Calu3 (cell line): ENCODE measurements at regions of chr5 and their contacts with region 1.

Region 1: DNA sequence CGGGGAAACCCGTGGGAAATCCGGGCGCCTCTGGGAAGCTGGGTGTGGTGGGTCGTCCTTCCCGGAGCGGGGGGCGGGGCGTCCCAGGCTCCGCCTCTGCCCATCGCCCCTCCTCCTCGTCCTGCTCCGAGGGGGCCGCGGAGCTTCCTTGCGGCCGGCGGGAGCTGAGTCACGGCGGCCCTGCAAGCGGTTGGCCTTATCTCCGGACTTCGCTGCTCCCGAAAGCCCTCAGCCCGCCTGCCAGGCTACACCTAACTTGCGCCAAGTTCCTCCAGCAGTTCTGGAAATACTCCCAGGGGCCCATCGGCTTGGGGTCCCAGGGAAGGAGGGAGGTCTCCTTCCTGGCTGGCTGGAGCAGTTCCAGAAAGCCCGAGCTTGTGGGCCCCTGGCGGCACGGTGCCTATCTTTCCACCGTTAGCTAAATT is 54.1 kb upstream of the CDKN2AIPNL start:
- DNase-seq: peak; percentile 96
- H3K4me3 Mint-ChIP-seq: peak overlapping the region; percentile 61
- H3K27ac Mint-ChIP-seq: peak overlapping the region; percentile 49
- H3K4me1 Mint-ChIP-seq: peaks cover 11% of the 10 kb centered on the region
- H3K27me3 Mint-ChIP-seq: no peaks in the 10 kb centered on the region
- CTCF ChIP-seq: no peak

Region 2: GRCh38 chr5:134436523-134437339 is 29.1 kb before region 1 on chr5:
- CTCF ChIA-PET with region 1: interaction called, 14 read pairs
- intact Hi-C with region 1: no loop called
- DNase-seq: peak; percentile 91
- H3K4me3 Mint-ChIP-seq: peak overlapping the region; percentile 29
- H3K27ac Mint-ChIP-seq: peak overlapping the region; percentile 80
- H3K4me1 Mint-ChIP-seq: peaks cover 62% of the 10 kb centered on the region
- H3K27me3 Mint-ChIP-seq: no peaks in the 10 kb centered on the region
- CTCF ChIP-seq: no peak

Region 3: GRCh38 chr5:134451936-134452505 is 13.8 kb before region 1 on chr5:
- CTCF ChIA-PET with region 1: interaction called, 10 read pairs
- intact Hi-C with region 1: no loop called
- DNase-seq: peak; percentile 66
- H3K4me3 Mint-ChIP-seq: no peak overlapping the region
- H3K27ac Mint-ChIP-seq: no peak overlapping the region
- H3K4me1 Mint-ChIP-seq: peaks cover 2% of the 10 kb centered on the region
- H3K27me3 Mint-ChIP-seq: no peaks in the 10 kb centered on the region
- CTCF ChIP-seq: no peak

Region 4: GRCh38 chr5:134503088-134503946 is 37.5 kb after region 1 on chr5:
- CTCF ChIA-PET with region 1: interaction called, 16 read pairs
- intact Hi-C with region 1: loop called (anchors 2 kb)
- DNase-seq: peak; percentile 95
- H3K4me3 Mint-ChIP-seq: peak overlapping the region; percentile 19
- H3K27ac Mint-ChIP-seq: peak overlapping the region; percentile 94
- H3K4me1 Mint-ChIP-seq: peaks cover 46% of the 10 kb centered on the region
- H3K27me3 Mint-ChIP-seq: no peaks in the 10 kb centered on the region
- CTCF ChIP-seq: no peak

Region 5: DNA sequence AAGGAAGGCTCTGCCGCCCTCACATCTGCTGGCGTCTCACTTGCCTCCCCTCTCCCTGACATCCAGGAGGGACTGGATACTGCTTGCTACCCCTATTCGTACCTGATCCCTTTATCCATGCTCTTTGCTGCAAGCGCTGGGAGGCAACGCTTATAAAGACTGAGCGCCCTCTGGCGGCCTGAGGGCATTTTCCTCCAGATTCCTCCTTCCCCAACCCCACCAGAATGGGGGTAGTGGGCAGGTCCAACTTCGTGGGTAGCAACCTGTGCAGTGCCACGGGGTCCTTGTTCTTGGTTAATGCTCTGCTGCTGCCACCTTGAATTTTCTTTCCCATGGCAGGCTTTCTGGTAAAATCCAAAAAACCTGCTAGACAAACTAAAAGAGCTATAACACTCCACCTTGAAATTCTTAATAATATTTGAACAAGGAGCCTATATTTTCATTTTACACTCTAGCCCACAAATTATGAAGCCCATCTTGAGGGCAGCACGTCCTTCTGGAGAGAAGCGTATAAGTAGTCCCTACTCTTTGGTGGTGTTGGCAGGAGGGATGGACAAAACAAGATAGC is 112.1 kb after region 1 on chr5:
- CTCF ChIA-PET with region 1: no interaction called
- intact Hi-C with region 1: no loop called
- DNase-seq: peak; percentile 88
- H3K4me3 Mint-ChIP-seq: no peak overlapping the region
- H3K27ac Mint-ChIP-seq: peak overlapping the region; percentile 77
- H3K4me1 Mint-ChIP-seq: peaks cover 19% of the 10 kb centered on the region
- H3K27me3 Mint-ChIP-seq: no peaks in the 10 kb centered on the region
- CTCF ChIP-seq: peak; percentile 90